Calu3 (cell line): ENCODE measurements at regions of chr7 and their contacts with region 1.

Region 1: GRCh38 chr7:8365503-8366110 is 67.8 kb upstream of the NXPH1 start:
- DNase-seq: peak; percentile 28
- H3K4me3 Mint-ChIP-seq: no peak overlapping the region
- H3K27ac Mint-ChIP-seq: no peak overlapping the region
- H3K4me1 Mint-ChIP-seq: peaks cover 9% of the 10 kb centered on the region
- H3K27me3 Mint-ChIP-seq: no peaks in the 10 kb centered on the region
- CTCF ChIP-seq: peak; percentile 71

Region 2: GRCh38 chr7:8254667-8255066 is 110.9 kb before region 1 on chr7:
- CTCF ChIA-PET with region 1: no interaction called
- intact Hi-C with region 1: no loop called
- DNase-seq: no peak
- H3K4me3 Mint-ChIP-seq: no peak overlapping the region
- H3K27ac Mint-ChIP-seq: no peak overlapping the region
- H3K4me1 Mint-ChIP-seq: no peaks in the 10 kb centered on the region
- H3K27me3 Mint-ChIP-seq: no peaks in the 10 kb centered on the region
- CTCF ChIP-seq: no peak

Region 3: DNA sequence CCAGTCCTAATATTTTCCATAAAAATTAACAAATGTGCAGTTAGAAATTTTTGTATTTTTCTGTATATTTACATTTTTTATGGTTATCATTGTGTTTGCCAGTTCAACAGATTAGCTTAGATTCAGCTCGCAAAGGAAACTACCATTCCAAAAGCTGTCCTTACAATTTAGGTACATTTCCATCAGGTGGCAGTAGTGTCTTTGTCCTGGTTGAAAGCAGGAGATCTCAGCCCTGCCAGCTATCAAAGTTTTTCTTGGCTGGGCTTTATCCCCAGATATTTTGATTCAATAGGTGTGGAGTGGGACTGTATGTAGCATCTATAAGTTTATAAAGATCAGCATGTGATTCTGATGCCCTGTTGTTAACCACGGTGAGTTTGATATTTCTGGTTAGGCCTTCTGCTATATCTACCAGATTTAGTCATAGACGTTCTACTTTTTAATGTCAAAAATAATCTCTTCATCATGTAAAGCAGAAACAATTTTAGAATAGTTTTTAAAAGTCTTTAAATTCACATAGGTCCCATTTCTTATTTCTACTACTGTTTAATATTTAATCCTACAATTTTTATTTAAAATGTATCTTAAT is 88.1 kb before region 1 on chr7:
- CTCF ChIA-PET with region 1: interaction called, 3 read pairs
- intact Hi-C with region 1: loop called (anchors 1 kb)
- DNase-seq: peak; percentile 44
- H3K4me3 Mint-ChIP-seq: no peak overlapping the region
- H3K27ac Mint-ChIP-seq: no peak overlapping the region
- H3K4me1 Mint-ChIP-seq: peaks cover 18% of the 10 kb centered on the region
- H3K27me3 Mint-ChIP-seq: no peaks in the 10 kb centered on the region
- CTCF ChIP-seq: peak; percentile 18

Region 4: GRCh38 chr7:8310876-8311275 is 54.7 kb before region 1 on chr7:
- CTCF ChIA-PET with region 1: interaction called, 3 read pairs
- intact Hi-C with region 1: loop called (anchors 5 kb)
- DNase-seq: no peak
- H3K4me3 Mint-ChIP-seq: no peak overlapping the region
- H3K27ac Mint-ChIP-seq: no peak overlapping the region
- H3K4me1 Mint-ChIP-seq: no peaks in the 10 kb centered on the region
- H3K27me3 Mint-ChIP-seq: peaks cover 23% of the 10 kb centered on the region
- CTCF ChIP-seq: no peak

Region 5: DNA sequence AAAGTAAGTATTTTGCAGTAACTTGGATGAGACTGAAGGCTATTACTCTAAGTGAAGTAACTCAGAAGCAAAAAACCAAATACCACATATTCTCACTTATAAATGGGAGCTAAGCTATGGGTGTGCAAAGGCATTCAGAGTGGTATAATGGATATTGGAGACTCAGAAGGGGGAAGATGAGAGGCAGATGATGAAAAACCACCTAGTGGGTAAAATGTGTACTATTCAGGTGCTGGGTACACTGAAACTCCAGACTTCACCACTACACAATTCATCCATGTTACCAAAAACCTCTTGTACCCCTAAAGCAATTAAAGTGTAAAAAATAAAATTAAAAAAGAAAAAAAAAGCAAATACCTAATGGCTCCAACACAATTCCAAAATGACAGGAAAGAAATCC is 419.5 kb after region 1 on chr7:
- CTCF ChIA-PET with region 1: no interaction called
- intact Hi-C with region 1: no loop called
- DNase-seq: no peak
- H3K4me3 Mint-ChIP-seq: no peak overlapping the region
- H3K27ac Mint-ChIP-seq: no peak overlapping the region
- H3K4me1 Mint-ChIP-seq: no peaks in the 10 kb centered on the region
- H3K27me3 Mint-ChIP-seq: no peaks in the 10 kb centered on the region
- CTCF ChIP-seq: no peak